OCI-LY7 (cell line): ENCODE measurements at regions of chr16 and their contacts with region 1.

Region 1: DNA sequence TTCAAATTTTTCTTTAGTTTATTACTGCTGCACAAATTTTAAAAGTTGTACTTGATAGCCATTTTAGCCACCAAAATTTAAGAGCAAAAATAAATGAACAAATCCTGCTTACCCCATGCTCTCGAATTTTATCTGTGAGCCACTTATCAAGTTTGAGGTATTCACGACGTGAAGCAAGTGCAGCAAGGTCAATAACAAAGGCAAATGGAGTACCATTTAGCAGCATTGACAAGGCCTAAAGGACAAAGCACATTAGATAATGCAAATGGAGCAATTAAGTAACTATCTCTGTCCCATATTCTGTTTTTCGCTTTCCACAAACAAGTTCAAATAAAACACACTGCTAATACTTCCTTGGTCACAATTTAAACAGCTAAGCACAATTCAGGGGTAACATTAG is 54.7 kb downstream of the CNOT1 start:
- DNase-seq: no peak
- H3K4me3 ChIP-seq: no peak overlapping the region
- H3K27ac ChIP-seq: no peak overlapping the region
- H3K4me1 ChIP-seq: no peaks in the 10 kb centered on the region
- CTCF ChIP-seq: no peak

Region 2: DNA sequence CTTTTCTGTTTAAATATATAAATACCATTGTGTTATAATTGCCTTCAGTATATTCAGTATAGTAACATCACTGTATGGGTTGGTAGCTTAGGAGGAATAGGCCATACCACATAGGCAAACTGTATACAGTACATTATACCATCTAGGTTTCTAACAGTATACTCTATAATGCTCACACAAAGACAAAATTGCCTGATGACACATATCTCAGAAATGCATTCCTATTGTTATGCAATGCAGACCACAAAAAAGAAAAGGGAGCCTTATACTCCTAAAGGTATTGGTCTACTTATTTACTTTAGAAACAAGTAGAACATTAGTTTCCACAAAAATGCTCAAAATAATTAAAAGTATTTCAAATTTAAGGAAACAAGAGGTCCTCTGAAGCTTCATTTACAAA is 11.7 kb before region 1 on chr16:
- CTCF ChIA-PET with region 1: no interaction called
- POLR2A ChIA-PET with region 1: interaction called, 5 read pairs
- intact Hi-C with region 1: loop called (anchors 2 kb)
- DNase-seq: no peak
- H3K4me3 ChIP-seq: no peak overlapping the region
- H3K27ac ChIP-seq: no peak overlapping the region
- H3K4me1 ChIP-seq: no peaks in the 10 kb centered on the region
- CTCF ChIP-seq: no peak

Region 3: GRCh38 chr16:58624209-58624608 is 49.3 kb after region 1 on chr16:
- CTCF ChIA-PET with region 1: no interaction called
- POLR2A ChIA-PET with region 1: no interaction called
- intact Hi-C with region 1: no loop called
- DNase-seq: no peak
- H3K4me3 ChIP-seq: no peak overlapping the region
- H3K27ac ChIP-seq: no peak overlapping the region
- H3K4me1 ChIP-seq: peaks cover 14% of the 10 kb centered on the region
- CTCF ChIP-seq: no peak